HepG2 (cell line): ENCODE measurements at regions of chr20 and their contacts with region 1.

Region 1: GRCh38 chr20:47501483-47502270 is at the start of gene NCOA3:
- DNase-seq: peak; percentile 97
- ATAC-seq: peak; percentile 97
- H3K4me3 ChIP-seq: peak within 1 kb of the TSS; percentile 100
- H3K27ac ChIP-seq: peak within 1 kb of the TSS; percentile 82
- H3K4me1 ChIP-seq: peaks cover 57% of the 10 kb centered on the region
- H3K27me3 ChIP-seq: no peaks in the 10 kb centered on the region; a peak in 1 of 5 replicates
- CTCF ChIP-seq: peak; percentile 84
- EP300 ChIP-seq: peak; percentile 63 to 64; a peak in 2 of 4 replicates
- POLR2A ChIP-seq: peak; percentile 90 to 96
- RAD21 ChIP-seq: peak; percentile 77
- total RNA-seq, gene NCOA3: 56.8 and 76.2 TPM in 2 replicates

Region 2: DNA sequence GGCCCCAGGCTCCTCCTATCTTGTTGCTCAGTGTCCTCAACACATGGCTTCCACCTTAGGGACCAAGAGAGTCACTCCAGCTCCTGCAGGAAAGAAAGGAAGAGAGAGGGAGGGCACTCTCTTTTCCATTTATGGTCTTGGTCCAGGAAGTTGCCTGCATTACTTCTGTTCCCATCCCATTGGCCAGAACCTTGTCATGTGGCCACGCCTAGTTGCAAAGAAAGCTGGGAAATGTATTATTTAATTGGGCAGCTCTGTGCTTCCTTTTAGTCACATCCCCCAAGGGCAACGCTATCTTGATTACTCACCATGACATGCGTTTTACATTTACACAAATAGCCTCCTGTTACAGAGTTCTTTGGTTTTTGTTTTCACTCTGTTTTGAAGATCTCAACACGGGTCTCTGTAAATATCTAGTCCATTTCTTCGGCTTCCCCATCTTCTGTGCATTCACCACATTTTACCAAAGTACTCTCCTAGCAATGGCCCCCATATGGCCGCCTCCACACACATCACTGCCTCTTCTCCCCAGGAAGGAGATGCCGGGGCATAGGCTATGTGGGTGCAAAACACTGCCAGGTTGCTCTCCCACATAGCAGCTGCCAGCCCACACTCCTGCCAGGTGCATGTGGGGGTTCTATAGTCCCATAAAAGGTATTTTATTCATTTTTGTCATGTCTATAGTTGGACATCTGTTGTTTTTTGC is 109.5 kb before region 1 on chr20:
- CTCF ChIA-PET with region 1: no interaction called
- POLR2A ChIA-PET with region 1: interaction called, 12 read pairs
- in situ Hi-C with region 1: no loop called
- intact Hi-C with region 1: no loop called
- DNase-seq: peak; percentile 71
- ATAC-seq: peak; percentile 53
- H3K4me3 ChIP-seq: no peak overlapping the region
- H3K27ac ChIP-seq: no peak overlapping the region
- H3K4me1 ChIP-seq: peaks cover 38% of the 10 kb centered on the region
- H3K27me3 ChIP-seq: no peaks in the 10 kb centered on the region
- CTCF ChIP-seq: no peak
- EP300 ChIP-seq: peak in 1 of 2 experiments; percentile 18; a peak in 1 of 4 replicates
- POLR2A ChIP-seq: no peak
- RAD21 ChIP-seq: no peak

Region 3: GRCh38 chr20:47453142-47453782 is 48.4 kb before region 1 on chr20:
- CTCF ChIA-PET with region 1: no interaction called
- POLR2A ChIA-PET with region 1: interaction called, 76 read pairs
- in situ Hi-C with region 1: no loop called
- intact Hi-C with region 1: loop called (anchors 1 kb)
- DNase-seq: peak; percentile 85
- ATAC-seq: no peak
- H3K4me3 ChIP-seq: no peak overlapping the region
- H3K27ac ChIP-seq: peak overlapping the region; percentile 83
- H3K4me1 ChIP-seq: peaks cover 93% of the 10 kb centered on the region
- H3K27me3 ChIP-seq: no peaks in the 10 kb centered on the region
- CTCF ChIP-seq: no peak
- EP300 ChIP-seq: peak in 1 of 2 experiments; percentile 81; a peak in 2 of 4 replicates
- POLR2A ChIP-seq: no peak
- RAD21 ChIP-seq: no peak

Region 4: DNA sequence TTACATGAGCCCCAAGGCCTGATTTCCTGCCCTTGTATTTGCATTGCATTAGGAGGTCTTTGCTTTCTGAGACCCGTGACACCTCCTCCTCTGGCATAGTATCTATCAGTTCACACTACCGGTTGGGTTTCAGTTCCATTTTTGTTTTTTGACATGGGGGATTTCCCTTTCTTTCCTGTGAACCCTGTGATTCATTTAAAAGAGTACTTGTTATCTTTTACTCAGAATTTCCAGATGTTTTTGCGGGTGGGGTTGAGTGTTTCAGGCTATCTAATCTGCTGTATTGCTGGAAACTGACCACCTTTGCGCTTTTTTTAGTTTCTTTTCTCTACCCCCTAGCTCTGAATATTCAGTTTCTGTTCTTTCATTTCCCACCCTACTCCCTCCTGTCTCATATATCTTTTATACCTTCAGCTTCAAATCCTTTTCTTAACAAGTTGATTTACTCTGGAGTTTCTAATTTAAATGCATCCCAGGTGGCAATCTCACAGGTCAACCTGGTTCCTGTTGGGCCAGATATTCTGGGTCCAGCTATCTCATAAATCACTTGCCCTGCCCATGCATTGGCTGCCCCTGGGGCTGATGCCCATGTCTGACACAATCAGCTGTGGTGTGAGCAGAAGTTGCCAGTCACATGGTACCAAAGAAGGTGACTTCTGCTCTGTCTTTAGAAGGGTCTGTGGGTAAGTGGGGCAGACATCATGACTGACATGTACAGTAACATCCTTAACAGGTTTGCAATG is 14.3 kb before region 1 on chr20:
- CTCF ChIA-PET with region 1: no interaction called
- POLR2A ChIA-PET with region 1: interaction called, 89 read pairs
- in situ Hi-C with region 1: no loop called
- intact Hi-C with region 1: no loop called
- DNase-seq: no peak
- ATAC-seq: no peak
- H3K4me3 ChIP-seq: no peak overlapping the region
- H3K27ac ChIP-seq: no peak overlapping the region
- H3K4me1 ChIP-seq: peaks cover 19% of the 10 kb centered on the region
- H3K27me3 ChIP-seq: no peaks in the 10 kb centered on the region
- CTCF ChIP-seq: no peak
- EP300 ChIP-seq: no peak
- POLR2A ChIP-seq: no peak
- RAD21 ChIP-seq: no peak

Region 5: GRCh38 chr20:47576516-47577033 is 74.9 kb after region 1 on chr20:
- CTCF ChIA-PET with region 1: no interaction called
- POLR2A ChIA-PET with region 1: interaction called, 15 read pairs
- in situ Hi-C with region 1: no loop called
- intact Hi-C with region 1: loop called (anchors 5 kb)
- DNase-seq: peak; percentile 97
- ATAC-seq: peak; percentile 98
- H3K4me3 ChIP-seq: peak overlapping the region; percentile 22 to 49 (median 44); a peak in 4 of 6 replicates
- H3K27ac ChIP-seq: peak overlapping the region; percentile 51
- H3K4me1 ChIP-seq: peaks cover 97% of the 10 kb centered on the region
- H3K27me3 ChIP-seq: no peaks in the 10 kb centered on the region
- CTCF ChIP-seq: peak; percentile 31
- EP300 ChIP-seq: peak; percentile 70 to 72
- POLR2A ChIP-seq: peak; percentile 41 to 48; a peak in 2 of 4 replicates
- RAD21 ChIP-seq: no peak

Region 6: GRCh38 chr20:47620808-47621805 is 119.4 kb after region 1 on chr20:
- CTCF ChIA-PET with region 1: no interaction called
- POLR2A ChIA-PET with region 1: no interaction called
- in situ Hi-C with region 1: no loop called
- intact Hi-C with region 1: loop called (anchors 1 kb)
- DNase-seq: peak; percentile 66
- ATAC-seq: 0 out of 3 replicates have a peak, but pooled peaks have one; percentile 33
- H3K4me3 ChIP-seq: no peak overlapping the region
- H3K27ac ChIP-seq: no peak overlapping the region
- H3K4me1 ChIP-seq: no peaks in the 10 kb centered on the region
- H3K27me3 ChIP-seq: no peaks in the 10 kb centered on the region
- CTCF ChIP-seq: peak; percentile 72
- EP300 ChIP-seq: no peak
- POLR2A ChIP-seq: no peak
- RAD21 ChIP-seq: peak; percentile 79